BJ (cell line): ENCODE measurements at regions of chr20 and their contacts with region 1.

Region 1: DNA sequence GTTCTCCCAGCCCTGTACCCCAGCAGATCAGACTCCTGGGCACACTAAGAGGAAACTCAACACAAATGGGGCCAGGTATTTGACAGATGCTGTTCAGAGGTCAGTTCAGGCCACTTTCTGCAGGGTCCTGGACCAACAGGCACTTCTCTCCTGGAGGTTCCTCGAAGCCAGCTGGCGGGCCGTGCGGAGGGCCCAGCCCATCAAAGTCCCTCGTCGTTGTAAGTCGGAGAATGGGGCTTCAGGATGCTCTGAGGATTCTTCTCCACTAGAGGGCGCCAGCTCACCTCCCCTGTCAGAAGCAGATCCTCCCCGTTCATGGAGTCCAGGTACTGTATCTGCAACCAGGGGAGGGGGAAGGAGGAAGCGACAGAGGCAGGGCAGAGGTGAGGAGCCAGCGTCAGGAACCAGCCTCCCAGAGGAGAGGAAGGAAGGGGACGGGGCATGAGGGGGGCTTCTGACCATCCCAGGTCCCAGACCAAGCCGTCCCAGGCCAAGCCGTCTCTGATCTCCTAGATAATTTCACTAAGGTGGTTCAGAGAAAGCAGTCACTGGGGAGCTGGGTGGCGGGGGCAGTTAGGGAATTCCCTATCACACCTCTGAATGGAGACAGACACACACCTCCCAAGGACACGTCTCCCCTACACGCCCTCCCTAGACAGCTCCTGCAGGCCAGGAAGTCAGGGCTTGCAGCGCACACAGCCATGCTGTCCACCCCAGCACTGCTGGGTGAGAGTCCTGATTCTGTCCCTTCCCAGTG is 11.7 kb upstream of the FAM83C start:
- DNase-seq: no peak
- H3K4me3 ChIP-seq: no peak overlapping the region
- H3K27me3 ChIP-seq: no peaks in the 10 kb centered on the region
- CTCF ChIP-seq: peak; percentile 95

Region 2: DNA sequence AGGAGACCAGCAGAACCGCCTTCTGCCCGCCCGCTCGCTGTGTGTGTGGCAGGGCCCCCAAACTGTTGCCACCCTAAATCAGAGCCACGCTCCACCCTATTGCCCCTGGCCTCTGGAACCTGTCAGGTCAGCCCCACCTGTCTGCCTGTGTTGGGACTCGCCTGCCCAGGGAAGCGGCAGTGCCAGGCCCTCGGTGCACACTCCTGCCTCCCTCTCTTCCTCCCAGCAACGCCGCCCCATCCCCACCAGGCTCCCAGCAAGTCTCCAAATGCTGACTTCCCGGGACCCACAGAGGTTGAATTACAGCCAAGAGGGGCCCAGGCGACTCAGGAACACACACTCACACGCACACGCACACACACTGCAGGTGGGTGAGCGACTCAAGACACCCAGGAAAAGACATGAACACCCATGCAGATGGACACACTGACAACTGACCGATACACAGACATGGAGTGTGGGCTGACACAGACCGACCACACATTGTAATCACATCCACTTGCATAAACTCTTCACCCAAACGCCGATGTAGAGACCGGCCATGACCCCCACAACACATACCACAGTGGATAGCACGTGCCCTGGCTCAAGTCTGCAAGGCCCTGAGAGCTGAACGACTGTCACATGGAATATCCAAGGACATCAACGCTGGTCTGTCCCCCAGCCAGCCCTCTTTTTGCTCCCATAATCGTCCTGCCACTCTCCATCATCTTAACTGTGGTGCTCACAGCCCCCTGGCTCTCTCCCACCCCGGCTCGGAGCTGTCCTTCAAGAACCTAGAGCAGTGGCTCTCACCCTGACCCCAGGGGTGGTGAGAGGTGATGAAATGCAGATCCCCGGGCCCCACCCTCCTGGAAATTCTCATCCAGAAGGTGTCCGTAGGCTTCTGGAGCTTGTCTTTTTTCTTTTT is 11.3 kb before region 1 on chr20 and contains the start of gene FAM83C:
- CTCF ChIA-PET with region 1: interaction called, 46 read pairs
- POLR2A ChIA-PET with region 1: no interaction called
- DNase-seq: no peak
- H3K4me3 ChIP-seq: no peak within 1 kb of the TSS
- H3K27me3 ChIP-seq: peaks cover 4% of the 10 kb centered on the region
- CTCF ChIP-seq: no peak
- polyA plus RNA-seq, gene FAM83C: not detected in 2 replicates

Region 3: DNA sequence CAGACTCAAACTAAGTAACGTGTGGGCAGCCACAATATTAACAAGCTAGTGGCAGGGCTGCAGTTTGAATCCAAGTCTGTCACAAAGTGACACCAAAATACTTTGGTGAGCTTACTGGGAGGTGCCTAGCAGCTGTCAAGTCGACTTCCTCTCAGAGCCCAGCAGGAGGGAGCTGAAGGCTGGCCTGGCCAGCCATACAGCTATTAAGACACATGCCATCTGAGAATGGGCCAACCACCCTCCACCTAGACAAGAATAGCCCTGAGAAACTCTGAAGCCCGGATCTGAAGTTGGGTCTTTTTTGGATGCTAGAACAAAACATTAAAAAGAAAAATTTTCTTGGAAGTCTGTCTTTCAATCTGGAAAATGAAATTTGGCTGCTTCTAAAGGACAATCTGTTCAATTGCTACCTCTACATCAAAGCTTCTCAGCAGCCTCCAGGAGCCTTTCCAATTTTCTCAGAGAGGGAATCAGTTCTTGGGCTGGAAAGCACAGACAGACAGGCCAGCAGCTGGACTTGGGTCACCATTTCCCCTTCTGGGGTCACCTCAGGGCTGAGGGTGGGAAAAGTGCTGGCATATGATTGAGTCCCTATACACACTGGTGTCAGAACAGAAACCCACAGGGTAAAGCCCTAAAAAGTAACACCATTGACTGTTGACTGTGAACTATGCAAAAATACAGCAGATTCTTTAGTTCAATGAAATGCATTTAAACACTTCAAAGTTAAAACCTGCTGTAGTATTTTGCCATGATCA is 64.9 kb after region 1 on chr20:
- CTCF ChIA-PET with region 1: interaction called, 10 read pairs
- POLR2A ChIA-PET with region 1: no interaction called
- DNase-seq: no peak
- H3K4me3 ChIP-seq: no peak overlapping the region
- H3K27me3 ChIP-seq: no peaks in the 10 kb centered on the region
- CTCF ChIP-seq: no peak

Region 4: GRCh38 chr20:35447082-35447789 is 143.3 kb after region 1 on chr20:
- CTCF ChIA-PET with region 1: interaction called, 392 read pairs
- POLR2A ChIA-PET with region 1: no interaction called
- DNase-seq: peak; percentile 20
- H3K4me3 ChIP-seq: peak overlapping the region; percentile 29
- H3K27me3 ChIP-seq: no peaks in the 10 kb centered on the region
- CTCF ChIP-seq: peak; percentile 98

Region 5: DNA sequence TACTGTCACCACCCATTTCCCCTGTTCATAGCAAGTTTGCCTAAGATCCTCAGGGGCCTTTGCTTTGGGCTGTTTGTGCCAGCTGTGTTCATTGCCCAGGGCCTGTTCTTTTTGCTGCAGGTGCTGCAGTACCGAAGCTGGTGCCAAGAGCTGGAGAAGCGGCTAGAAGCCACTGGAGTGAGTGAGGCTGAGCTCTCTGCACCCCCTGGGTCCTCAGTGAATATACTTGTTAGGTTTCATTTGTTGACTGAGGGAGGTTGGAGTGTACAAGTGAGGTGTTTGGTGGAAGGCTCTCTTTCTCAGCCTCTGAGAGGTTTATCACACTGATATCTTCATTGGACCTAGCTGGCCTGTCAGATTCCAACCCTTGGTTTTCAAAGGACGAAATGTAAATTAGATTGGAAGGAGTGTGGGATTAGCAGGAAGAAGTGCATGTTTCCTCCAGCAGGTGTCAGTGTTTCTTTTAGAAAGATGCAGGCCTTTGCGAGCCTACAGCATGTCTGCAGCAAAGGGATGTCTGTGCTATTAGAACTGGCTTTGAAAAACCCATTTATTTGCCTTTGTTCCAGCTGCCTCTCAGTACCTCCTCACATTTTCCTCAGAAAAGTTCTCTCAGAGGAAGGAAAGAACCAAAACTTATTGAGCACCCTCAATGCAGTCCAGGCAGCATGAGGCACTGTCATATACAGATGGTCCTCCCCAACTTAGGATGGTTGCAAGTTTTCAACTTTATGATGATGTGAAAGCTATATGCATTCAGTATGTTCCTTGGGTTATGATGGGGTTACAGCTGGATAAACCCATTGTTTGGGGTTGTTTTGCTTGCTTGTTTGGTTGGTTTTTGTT is 159.8 kb after region 1 on chr20:
- CTCF ChIA-PET with region 1: interaction called, 10 read pairs
- POLR2A ChIA-PET with region 1: no interaction called
- DNase-seq: no peak
- H3K4me3 ChIP-seq: no peak overlapping the region
- H3K27me3 ChIP-seq: no peaks in the 10 kb centered on the region
- CTCF ChIP-seq: peak; percentile 75